ENCODE measurements at regions of chr6 and their contacts with region 1.

Region 1: GRCh38 chr6:28981833-28982475 is 23.2 kb downstream of the ZNF311 start:
- DNase-seq: peak; percentile 91
- H3K4me3 Mint-ChIP-seq: peak overlapping the region; percentile 92
- H3K27ac Mint-ChIP-seq: peak overlapping the region; percentile 95
- H3K4me1 Mint-ChIP-seq: peaks cover 56% of the 10 kb centered on the region
- H3K27me3 Mint-ChIP-seq: peaks cover 38% of the 10 kb centered on the region

Region 2: GRCh38 chr6:28838634-28839442 is 143.1 kb before region 1 on chr6:
- intact Hi-C with region 1: loop called (anchors 1 kb)
- DNase-seq: peak; percentile 94
- H3K4me3 Mint-ChIP-seq: peak overlapping the region; percentile 98
- H3K27ac Mint-ChIP-seq: peak overlapping the region; percentile 81
- H3K4me1 Mint-ChIP-seq: peaks cover 16% of the 10 kb centered on the region
- H3K27me3 Mint-ChIP-seq: peaks cover 44% of the 10 kb centered on the region

Region 3: DNA sequence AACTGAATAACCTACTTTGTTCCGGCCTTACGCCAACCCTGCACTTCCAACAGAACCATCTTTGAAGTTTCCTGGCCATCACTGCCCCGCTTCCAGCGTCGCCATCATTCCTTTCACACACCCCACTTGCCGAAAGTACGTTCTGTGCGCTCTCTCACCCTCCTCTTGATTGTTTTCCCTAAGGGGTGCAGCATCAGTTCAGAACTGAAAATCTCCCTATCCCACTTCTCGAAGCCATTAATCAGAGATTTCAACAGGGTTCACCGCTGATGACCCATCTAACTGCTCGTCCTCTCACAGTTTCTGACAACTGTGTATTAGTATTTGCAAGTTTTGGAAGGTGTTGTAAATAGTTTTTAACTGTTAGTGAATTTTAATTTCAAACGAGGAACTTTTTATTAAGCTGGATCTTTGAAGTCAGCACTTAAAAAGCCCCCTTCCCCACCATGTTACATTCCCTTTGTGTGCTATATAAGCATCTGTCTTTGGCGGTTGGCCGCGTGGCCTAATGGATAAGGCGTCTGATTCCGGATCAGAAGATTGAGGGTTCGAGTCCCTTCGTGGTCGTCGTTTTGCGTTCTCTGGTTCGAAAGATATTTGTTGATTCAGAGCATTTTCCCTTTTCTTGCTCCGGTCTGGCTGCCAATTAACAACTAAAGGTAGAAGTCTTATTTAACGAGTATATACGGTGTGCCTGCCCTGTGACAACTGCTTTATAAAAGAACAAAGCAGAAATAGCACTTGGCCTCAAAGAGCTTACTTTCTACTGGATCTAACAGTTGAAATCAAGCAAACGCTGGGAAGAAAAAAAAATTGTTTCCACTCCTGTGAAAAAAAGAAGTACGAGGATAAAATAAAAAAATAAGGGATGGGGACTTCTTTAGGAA is 100.8 kb before region 1 on chr6:
- intact Hi-C with region 1: loop called (anchors 5 kb)
- DNase-seq: peak; percentile 85
- H3K4me3 Mint-ChIP-seq: peak overlapping the region; percentile 61
- H3K27ac Mint-ChIP-seq: peak overlapping the region; percentile 34
- H3K4me1 Mint-ChIP-seq: peaks cover 26% of the 10 kb centered on the region
- H3K27me3 Mint-ChIP-seq: peaks cover 29% of the 10 kb centered on the region

Region 4: GRCh38 chr6:28953039-28953584 is 28.8 kb before region 1 on chr6:
- intact Hi-C with region 1: loop called (anchors 1 kb)
- DNase-seq: peak; percentile 83
- H3K4me3 Mint-ChIP-seq: peak overlapping the region; percentile 85
- H3K27ac Mint-ChIP-seq: peak overlapping the region; percentile 65
- H3K4me1 Mint-ChIP-seq: peaks cover 26% of the 10 kb centered on the region
- H3K27me3 Mint-ChIP-seq: peaks cover 16% of the 10 kb centered on the region

Region 5: GRCh38 chr6:29005183-29005885 is 23.4 kb after region 1 on chr6 and contains the start of gene ZNF311:
- intact Hi-C with region 1: loop called (anchors 2 kb)
- DNase-seq: peak; percentile 85
- H3K4me3 Mint-ChIP-seq: peak within 1 kb of the TSS; percentile 90
- H3K27ac Mint-ChIP-seq: peak within 1 kb of the TSS; percentile 87
- H3K4me1 Mint-ChIP-seq: peaks cover 20% of the 10 kb centered on the region
- H3K27me3 Mint-ChIP-seq: peaks cover 7% of the 10 kb centered on the region
- total RNA-seq, gene ZNF311: 0.86 and 0.97 TPM in 2 replicates